ENCODE measurements at regions of chr3 and their contacts with region 1.

Region 1: GRCh38 chr3:132730891-132731580 is 8.8 kb upstream of the NPHP3 start:
- DNase-seq: no peak
- H3K4me3 ChIP-seq: no peak overlapping the region
- H3K27ac ChIP-seq: no peak overlapping the region
- H3K4me1 ChIP-seq: no peaks in the 10 kb centered on the region
- H3K27me3 ChIP-seq: no peaks in the 10 kb centered on the region
- CTCF ChIP-seq: no peak
- POLR2A ChIP-seq: no peak

Region 2: GRCh38 chr3:133426721-133427120 is 695.7 kb after region 1 on chr3:
- intact Hi-C with region 1: loop called (anchors 5 kb)
- DNase-seq: no peak
- H3K4me3 ChIP-seq: no peak overlapping the region
- H3K27ac ChIP-seq: no peak overlapping the region
- H3K4me1 ChIP-seq: no peaks in the 10 kb centered on the region
- H3K27me3 ChIP-seq: no peaks in the 10 kb centered on the region
- CTCF ChIP-seq: no peak
- POLR2A ChIP-seq: no peak

Measured in testis (tissue), 5 donors.